Spleen (tissue), 13 donors: ENCODE measurements at regions of chr17 and their contacts with region 1.

Region 1: DNA sequence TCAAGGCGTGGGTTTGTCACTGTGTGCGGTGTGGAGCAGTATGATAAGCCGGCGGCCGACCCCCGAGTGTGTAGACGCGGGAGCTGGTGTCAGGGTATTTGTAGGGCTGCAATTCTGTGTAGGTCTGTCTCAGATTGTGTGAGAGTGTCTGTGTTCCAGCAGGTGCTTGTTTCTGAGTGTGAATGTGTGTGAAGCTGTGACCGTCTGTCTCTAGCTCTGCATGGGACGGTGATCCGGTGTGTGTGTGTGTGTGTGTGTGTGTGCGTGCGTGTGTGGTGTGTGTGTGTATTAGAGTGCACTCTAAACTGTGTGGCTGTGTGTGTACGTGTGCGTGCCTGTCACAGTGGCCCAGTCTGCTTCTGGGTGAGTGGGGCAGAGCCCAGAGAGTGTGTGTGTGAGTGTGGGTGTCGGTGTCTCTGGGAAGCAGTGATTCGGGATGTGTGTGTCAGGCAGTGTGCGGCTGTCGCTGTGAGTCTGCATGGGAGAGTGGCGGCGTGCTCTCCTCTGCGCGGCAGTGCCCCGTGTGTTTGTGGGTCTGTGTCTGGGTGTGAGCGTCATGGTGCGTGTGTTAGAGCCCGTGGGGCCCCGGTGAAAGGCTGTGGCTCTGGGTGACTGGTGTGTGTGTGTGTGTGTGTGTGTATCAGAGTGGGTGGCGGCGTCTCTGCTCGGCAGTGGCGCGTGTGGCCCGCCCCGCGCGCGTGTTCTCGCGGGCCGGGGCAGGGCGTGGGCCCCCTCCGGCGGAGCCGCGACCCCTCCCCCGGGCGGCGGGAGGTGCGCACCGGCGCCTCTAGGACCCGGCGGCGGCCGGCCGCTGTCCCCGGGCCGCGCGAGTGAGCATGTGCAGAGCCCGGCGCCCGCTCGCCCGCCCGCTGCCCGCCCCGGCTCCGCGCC is at the start of gene WSCD1:
- DNase-seq: peak; percentile 28
- H3K4me3 ChIP-seq: peak within 1 kb of the TSS; percentile 35 to 76 (median 50)
- H3K27ac ChIP-seq: peak within 1 kb of the TSS in 6 of 8 donors; percentile 63 to 78 (median 69)
- H3K4me1 ChIP-seq: peaks cover 0 to 33% (median 14%) of the 10 kb centered on the region in 6 donors
- H3K27me3 ChIP-seq: peaks cover 0 to 96% (median 14%) of the 10 kb centered on the region in 7 donors
- CTCF ChIP-seq: no peak
- POLR2A ChIP-seq: no peak
- total RNA-seq, gene WSCD1: 22.9 to 84.1 (median 53.6) TPM

Region 2: DNA sequence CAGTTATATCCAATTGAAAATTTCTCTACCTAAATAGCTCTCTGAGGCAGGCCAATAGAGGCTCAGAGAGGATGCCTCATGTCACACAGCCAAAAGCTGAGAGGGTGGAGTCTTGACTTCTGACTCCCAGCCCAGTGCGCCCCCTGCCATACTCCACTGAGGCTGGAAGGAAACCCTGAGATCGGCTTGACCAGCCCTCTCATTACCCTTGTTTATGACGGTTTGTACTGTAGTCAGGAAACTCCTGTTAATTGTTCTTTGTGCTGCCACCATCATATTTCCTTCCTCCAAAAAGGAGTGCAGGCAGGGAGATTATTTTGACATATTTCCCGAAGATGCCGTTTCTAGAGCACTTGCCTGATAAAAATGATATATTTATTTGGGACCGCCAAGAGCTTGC is 257.2 kb after region 1 on chr17:
- intact Hi-C with region 1: loop called (anchors 5 kb)
- DNase-seq: peak; percentile 78
- H3K4me3 ChIP-seq: no peak overlapping the region
- H3K27ac ChIP-seq: peak overlapping the region in 7 of 8 donors; percentile 48 to 86 (median 74)
- H3K4me1 ChIP-seq: peaks cover 0 to 40% (median 13%) of the 10 kb centered on the region in 6 donors
- H3K27me3 ChIP-seq: peaks cover 0 to 35% (median 0%) of the 10 kb centered on the region in 7 donors
- CTCF ChIP-seq: peak in 4 of 11 experiments; percentile 17 to 28 (median 22)
- POLR2A ChIP-seq: no peak